ENCODE measurements at regions of chr6 and their contacts with region 1.

Region 1: GRCh38 chr6:30769088-30769852 is 24.9 kb upstream of the IER3 start:
- DNase-seq: peak; percentile 85
- H3K4me3 Mint-ChIP-seq: peak overlapping the region; percentile 62
- H3K27ac Mint-ChIP-seq: peak overlapping the region; percentile 97
- H3K4me1 Mint-ChIP-seq: peaks cover 79% of the 10 kb centered on the region
- H3K27me3 Mint-ChIP-seq: no peaks in the 10 kb centered on the region

Region 2: GRCh38 chr6:30234356-30234755 is 534.9 kb before region 1 on chr6:
- CTCF ChIA-PET with region 1: no interaction called
- intact Hi-C with region 1: no loop called
- DNase-seq: no peak
- H3K4me3 Mint-ChIP-seq: no peak overlapping the region
- H3K27ac Mint-ChIP-seq: no peak overlapping the region
- H3K4me1 Mint-ChIP-seq: no peaks in the 10 kb centered on the region
- H3K27me3 Mint-ChIP-seq: peaks cover 12% of the 10 kb centered on the region

Region 3: GRCh38 chr6:30793521-30794194 is 24.4 kb after region 1 on chr6:
- CTCF ChIA-PET with region 1: interaction called, 3 read pairs
- intact Hi-C with region 1: loop called (anchors 1 kb)
- DNase-seq: no peak
- H3K4me3 Mint-ChIP-seq: peak overlapping the region; percentile 60
- H3K27ac Mint-ChIP-seq: peak overlapping the region; percentile 89
- H3K4me1 Mint-ChIP-seq: peaks cover 52% of the 10 kb centered on the region
- H3K27me3 Mint-ChIP-seq: no peaks in the 10 kb centered on the region